ENCODE measurements at regions of chr15 and their contacts with region 1.

Region 1: GRCh38 chr15:51380999-51381795 is 39.7 kb downstream of the GLDN start:
- DNase-seq: peak in 4 of 5 donors; percentile 54 to 60 (median 58)
- ATAC-seq: peak; percentile 85 to 96 (median 91)
- H3K4me3 ChIP-seq: no peak overlapping the region
- H3K27ac ChIP-seq: no peak overlapping the region
- H3K4me1 ChIP-seq: peaks cover 0 to 12% (median 0%) of the 10 kb centered on the region in 12 donors
- H3K27me3 ChIP-seq: no peaks in the 10 kb centered on the region
- CTCF ChIP-seq: peak; percentile 82 to 96 (median 90)
- POLR2A ChIP-seq: no peak

Region 2: DNA sequence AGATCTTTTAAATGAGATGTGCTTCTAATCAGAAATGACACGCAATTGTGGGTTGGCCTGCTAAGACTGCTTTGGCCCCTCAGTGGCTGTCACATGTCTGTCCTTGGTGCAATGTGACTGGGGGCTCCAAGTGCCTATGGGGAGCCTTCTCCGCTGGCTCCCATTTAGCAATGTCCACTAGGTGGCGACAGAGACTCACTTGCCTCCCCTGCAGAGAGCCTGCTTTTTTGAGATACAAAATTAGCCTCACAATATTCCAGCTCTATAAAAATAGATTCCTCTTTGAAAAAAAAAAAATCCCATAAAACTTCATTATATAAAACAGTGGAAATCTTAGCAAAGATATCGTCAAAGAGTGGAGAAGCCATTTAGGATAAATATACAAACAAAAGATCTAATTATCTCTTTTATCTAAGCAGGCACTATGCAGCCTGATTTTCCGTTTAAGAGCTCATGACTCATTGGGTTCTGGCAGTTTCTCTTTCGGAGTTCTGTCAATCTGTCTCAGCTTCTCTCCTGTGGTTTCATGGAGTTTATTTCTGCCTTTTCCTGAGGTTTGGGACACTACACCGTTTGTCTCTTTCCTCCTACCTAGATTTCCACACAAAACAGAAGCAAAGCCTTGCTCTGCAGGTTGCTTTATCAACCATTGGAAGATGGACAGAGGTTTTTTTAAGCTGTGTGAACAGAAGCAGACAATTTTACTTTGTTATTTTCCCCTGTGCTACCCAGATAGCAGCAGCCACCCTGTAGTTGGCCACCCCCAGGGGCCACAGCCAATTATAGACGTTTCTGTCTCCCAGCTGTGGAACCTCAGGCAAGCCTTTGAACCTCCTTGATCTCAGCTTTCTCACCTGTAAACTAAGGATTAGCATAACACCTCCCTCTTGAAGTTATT is 218.1 kb before region 1 on chr15:
- intact Hi-C with region 1: loop called in 9 of 10 experiments (anchors 1 to 10 kb)
- DNase-seq: peak in 4 of 5 donors; percentile 67 to 73 (median 68)
- ATAC-seq: peak; percentile 80 to 96 (median 90)
- H3K4me3 ChIP-seq: peak overlapping the region in 9 of 12 donors; percentile 13 to 38 (median 30)
- H3K27ac ChIP-seq: peak overlapping the region in 9 of 12 donors; percentile 6 to 75 (median 61)
- H3K4me1 ChIP-seq: peaks cover 0 to 20% (median 8%) of the 10 kb centered on the region in 12 donors
- H3K27me3 ChIP-seq: no peaks in the 10 kb centered on the region
- CTCF ChIP-seq: peak; percentile 89 to 99 (median 95)
- POLR2A ChIP-seq: no peak

Region 3: DNA sequence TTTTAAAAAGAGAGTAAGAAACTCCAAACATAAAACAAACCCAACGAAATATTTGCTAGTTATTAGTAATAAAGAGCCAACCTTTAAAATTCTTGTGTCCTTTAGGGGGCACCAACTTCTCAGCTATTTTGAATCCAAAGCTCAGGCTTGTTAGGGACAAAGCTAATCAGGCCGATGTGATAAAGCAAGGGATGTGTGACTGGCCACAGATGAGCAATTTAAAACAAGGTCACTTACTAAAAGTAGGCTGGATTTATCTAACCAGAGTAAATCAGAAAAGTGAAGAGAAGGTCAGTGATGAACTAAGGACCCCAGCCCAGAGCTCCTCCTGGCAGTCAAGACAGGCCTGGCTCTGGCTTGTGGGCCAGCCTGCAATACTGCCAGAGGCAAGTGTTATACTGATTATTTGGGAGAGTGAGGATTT is 151.3 kb before region 1 on chr15:
- intact Hi-C with region 1: loop called in 8 of 10 experiments (anchors 2 to 5 kb)
- DNase-seq: no peak
- ATAC-seq: peak; percentile 17 to 76 (median 52)
- H3K4me3 ChIP-seq: no peak overlapping the region
- H3K27ac ChIP-seq: peak overlapping the region in 2 of 12 donors; percentile 3 to 28
- H3K4me1 ChIP-seq: peaks cover 0 to 37% (median 7%) of the 10 kb centered on the region in 12 donors
- H3K27me3 ChIP-seq: no peaks in the 10 kb centered on the region
- CTCF ChIP-seq: peak in 7 of 12 donors; percentile 28 to 56 (median 44)
- POLR2A ChIP-seq: no peak

Region 4: DNA sequence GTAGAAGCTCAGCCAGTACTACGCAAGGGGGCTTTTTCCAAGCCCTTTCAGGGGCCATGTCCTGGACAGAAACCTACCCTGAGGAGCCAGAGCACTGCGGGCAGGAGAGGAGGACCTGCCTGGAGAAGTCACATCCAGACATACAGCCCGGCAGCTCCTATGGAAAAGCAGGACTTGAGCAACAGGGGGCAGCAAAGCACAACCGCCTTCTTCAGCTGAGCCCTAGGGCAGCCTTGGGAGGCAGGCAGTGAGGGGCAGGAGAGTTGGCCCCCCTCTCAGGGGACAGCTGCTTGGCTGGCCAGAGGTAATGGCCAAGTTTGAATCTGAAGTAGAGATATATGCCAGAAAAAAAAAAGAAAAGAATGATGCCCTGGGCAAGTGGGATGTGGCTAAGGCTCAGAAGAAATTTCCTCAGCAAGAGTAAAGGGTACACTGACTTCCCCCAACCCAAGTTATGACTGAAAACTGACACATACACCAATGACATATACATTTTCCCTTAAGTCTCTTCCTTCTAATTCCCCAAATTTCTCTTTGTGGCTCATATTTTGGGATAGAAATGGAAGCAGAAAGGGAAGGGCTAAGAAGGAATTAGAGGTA is 99.7 kb before region 1 on chr15:
- intact Hi-C with region 1: loop called (anchors 1 to 2 kb)
- DNase-seq: peak; percentile 57 to 81 (median 71)
- ATAC-seq: peak; percentile 68 to 94 (median 92)
- H3K4me3 ChIP-seq: no peak overlapping the region
- H3K27ac ChIP-seq: peak overlapping the region in 3 of 12 donors; percentile 3 to 44 (median 25)
- H3K4me1 ChIP-seq: peaks cover 0 to 25% (median 0%) of the 10 kb centered on the region in 12 donors
- H3K27me3 ChIP-seq: peaks cover 0 to 9% (median 0%) of the 10 kb centered on the region in 9 donors
- CTCF ChIP-seq: peak; percentile 64 to 81 (median 78)
- POLR2A ChIP-seq: no peak

Region 5: DNA sequence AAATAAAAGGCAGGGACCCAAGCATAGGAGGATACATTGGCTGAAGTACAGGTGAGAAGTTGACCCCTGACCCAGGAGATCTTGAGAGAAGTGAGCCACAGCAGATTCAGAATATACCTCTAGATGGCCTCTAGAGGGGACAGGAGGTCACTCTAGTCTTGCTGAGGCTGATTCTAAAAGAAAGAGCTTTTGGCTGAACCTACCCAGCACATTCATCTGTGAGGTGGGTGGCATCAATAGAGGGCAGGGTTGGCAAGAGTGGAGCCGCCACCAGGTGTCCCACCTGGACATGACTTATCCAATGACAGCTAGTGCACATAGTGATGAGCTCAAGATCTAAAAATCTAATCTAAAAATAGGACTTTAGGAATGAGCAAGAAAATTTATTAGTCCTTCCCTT is 94.4 kb before region 1 on chr15:
- intact Hi-C with region 1: loop called (anchors 1 to 2 kb)
- DNase-seq: no peak
- ATAC-seq: peak in 3 of 4 donors; percentile 41 to 68 (median 51)
- H3K4me3 ChIP-seq: no peak overlapping the region
- H3K27ac ChIP-seq: no peak overlapping the region
- H3K4me1 ChIP-seq: peaks cover 0 to 17% (median 0%) of the 10 kb centered on the region in 12 donors
- H3K27me3 ChIP-seq: no peaks in the 10 kb centered on the region
- CTCF ChIP-seq: peak in 10 of 12 donors; percentile 11 to 45 (median 32)
- POLR2A ChIP-seq: no peak

Region 6: GRCh38 chr15:51403072-51403878 is 22.1 kb after region 1 on chr15:
- intact Hi-C with region 1: no loop called
- DNase-seq: no peak
- ATAC-seq: peak in 2 of 4 donors; percentile 26 to 32
- H3K4me3 ChIP-seq: no peak overlapping the region
- H3K27ac ChIP-seq: no peak overlapping the region
- H3K4me1 ChIP-seq: peaks cover 0 to 3% (median 0%) of the 10 kb centered on the region in 12 donors
- H3K27me3 ChIP-seq: no peaks in the 10 kb centered on the region
- CTCF ChIP-seq: peak in 11 of 12 donors; percentile 16 to 63 (median 51)
- POLR2A ChIP-seq: no peak

Measured in heart left ventricle (tissue), 16 donors.